Activated CD4-positive, alpha-beta memory T cell treated with anti-CD3 and anti-CD28 coated beads, Interleukin-2, amount 10 ng/mL, durations not matched to agents 7 days and 5 days (primary cell): ENCODE measurements at regions of chr1 and their contacts with region 1.

Region 1: DNA sequence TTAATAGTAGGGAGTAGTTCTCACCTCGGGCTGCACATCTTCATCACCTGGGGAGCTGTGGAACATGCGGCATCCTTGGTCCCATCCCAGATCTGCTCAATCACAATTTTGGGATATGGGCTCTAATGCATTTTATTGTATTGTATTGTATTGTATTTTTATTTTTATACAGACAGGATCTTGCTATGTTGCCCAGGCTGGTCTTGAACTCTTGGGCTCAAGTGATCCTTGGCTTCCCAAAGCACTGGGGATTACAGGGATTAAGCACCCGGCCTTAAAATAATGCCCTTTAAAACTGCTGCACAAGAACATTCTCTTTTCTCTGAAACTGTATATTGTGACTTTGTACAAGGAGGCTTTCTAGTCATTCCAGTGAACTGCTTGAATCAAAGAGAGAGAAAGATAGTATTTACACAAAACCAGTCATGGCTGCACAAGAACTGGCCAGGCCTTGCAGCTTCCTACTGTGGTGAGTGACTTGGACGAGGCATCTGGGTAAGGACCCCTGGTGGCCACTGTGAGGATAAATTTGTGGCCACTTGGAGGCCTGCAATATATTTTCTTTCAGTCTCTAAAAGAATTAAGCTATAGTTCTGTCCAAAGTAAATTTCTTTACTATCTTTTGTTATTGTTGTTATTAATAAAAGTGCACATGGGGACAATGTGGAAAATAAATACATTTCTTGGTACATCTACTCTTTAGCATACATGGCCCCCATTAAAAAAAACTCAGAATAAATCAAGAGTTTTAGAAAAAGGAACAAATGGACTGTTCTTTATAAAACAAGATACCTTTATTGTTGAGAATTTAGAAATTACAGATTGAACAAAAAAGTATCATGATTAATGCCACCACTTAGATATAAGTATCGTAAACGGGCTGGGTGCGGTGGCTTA is 48.0 kb downstream of the TBCE start:
- DNase-seq: peak; percentile 66
- H3K4me3 Mint-ChIP-seq: no peak overlapping the region
- H3K27ac Mint-ChIP-seq: no peak overlapping the region
- H3K4me1 Mint-ChIP-seq: peaks cover 2% of the 10 kb centered on the region
- H3K27me3 Mint-ChIP-seq: no peaks in the 10 kb centered on the region

Region 2: GRCh38 chr1:235093696-235094592 is 321.3 kb before region 1 on chr1:
- CTCF ChIA-PET with region 1: interaction called, 19 read pairs
- POLR2A ChIA-PET with region 1: no interaction called
- DNase-seq: peak; percentile 85
- H3K4me3 Mint-ChIP-seq: no peak overlapping the region
- H3K27ac Mint-ChIP-seq: no peak overlapping the region
- H3K4me1 Mint-ChIP-seq: peaks cover 13% of the 10 kb centered on the region
- H3K27me3 Mint-ChIP-seq: peaks cover 3% of the 10 kb centered on the region

Region 3: DNA sequence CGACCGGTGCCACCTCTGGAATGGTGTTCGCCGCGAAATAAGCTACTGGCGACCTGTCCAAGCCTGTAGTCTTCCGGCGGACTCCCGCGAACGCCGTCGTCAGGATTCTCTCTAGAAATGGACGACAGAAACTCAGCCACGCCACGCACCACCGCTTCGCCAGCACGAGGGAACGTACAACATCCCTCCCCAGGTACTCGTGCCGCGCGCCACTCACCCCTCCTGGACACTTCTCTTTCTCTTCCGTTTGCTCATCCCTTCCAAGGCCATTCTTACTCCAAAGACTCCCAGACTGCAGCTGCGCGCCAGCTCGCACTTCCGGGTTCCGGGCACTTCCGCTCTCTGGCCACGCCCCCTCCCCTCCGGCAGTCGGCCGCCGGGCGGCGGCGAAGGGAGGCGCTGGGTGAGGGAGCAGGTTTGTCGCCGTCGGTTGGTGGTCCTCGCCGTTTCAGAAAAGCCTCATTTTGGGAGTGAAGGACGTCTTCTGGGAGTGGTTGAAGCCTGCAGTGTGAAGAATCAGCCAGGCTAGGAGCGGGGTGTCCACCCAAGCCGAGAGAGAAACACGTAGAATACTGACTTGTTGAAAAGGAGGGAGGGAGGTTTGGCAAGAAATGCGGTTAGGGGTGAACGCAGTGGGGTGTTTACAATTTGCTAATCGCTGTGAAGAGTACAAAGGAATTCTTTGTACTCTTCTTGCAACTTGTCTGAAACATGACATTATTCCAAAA is 254.1 kb before region 1 on chr1 and contains the start of gene RBM34:
- CTCF ChIA-PET with region 1: interaction called, 19 read pairs
- POLR2A ChIA-PET with region 1: interaction called, 4 read pairs
- DNase-seq: peak; percentile 93
- H3K4me3 Mint-ChIP-seq: peak within 1 kb of the TSS; percentile 98
- H3K27ac Mint-ChIP-seq: peak within 1 kb of the TSS; percentile 95
- H3K4me1 Mint-ChIP-seq: peaks cover 26% of the 10 kb centered on the region
- H3K27me3 Mint-ChIP-seq: no peaks in the 10 kb centered on the region
- total RNA-seq, gene RBM34: 95.7 to 102 TPM

Region 4: DNA sequence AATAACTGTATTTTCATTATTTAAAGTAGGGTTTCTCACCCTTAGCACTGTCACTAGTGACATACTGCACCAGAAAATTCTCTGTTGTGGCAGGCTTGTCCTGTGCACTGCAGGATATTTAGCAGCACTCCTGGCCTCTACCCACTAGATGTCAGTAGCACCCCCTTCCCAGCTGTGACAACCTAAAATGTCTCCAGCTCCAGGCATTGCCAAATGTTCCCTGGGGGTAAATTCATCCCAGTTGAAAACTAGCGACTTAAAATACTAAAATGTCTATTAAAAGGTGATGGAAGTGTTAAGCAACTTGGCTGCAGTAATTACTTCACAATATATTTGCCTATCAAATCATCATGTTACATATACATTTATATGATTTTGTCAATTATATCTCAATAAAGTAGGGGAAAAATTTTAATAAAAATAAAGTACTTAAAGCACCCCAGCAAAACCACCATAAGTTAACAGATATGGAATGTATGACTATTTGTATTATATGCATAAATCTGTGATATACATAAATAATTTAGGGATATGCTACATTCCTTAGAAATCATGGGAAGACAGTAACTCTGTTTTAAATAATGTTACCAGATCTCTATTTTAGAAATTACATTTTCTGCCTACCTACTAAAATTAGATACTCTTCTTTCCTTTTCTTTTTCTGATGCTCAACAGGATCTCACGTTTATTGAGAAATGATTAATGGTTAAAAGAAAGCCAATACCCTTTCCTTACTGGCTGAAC is 161.9 kb before region 1 on chr1:
- CTCF ChIA-PET with region 1: interaction called, 43 read pairs
- POLR2A ChIA-PET with region 1: no interaction called
- DNase-seq: peak; percentile 61
- H3K4me3 Mint-ChIP-seq: no peak overlapping the region
- H3K27ac Mint-ChIP-seq: no peak overlapping the region
- H3K4me1 Mint-ChIP-seq: peaks cover 19% of the 10 kb centered on the region
- H3K27me3 Mint-ChIP-seq: no peaks in the 10 kb centered on the region

Region 5: DNA sequence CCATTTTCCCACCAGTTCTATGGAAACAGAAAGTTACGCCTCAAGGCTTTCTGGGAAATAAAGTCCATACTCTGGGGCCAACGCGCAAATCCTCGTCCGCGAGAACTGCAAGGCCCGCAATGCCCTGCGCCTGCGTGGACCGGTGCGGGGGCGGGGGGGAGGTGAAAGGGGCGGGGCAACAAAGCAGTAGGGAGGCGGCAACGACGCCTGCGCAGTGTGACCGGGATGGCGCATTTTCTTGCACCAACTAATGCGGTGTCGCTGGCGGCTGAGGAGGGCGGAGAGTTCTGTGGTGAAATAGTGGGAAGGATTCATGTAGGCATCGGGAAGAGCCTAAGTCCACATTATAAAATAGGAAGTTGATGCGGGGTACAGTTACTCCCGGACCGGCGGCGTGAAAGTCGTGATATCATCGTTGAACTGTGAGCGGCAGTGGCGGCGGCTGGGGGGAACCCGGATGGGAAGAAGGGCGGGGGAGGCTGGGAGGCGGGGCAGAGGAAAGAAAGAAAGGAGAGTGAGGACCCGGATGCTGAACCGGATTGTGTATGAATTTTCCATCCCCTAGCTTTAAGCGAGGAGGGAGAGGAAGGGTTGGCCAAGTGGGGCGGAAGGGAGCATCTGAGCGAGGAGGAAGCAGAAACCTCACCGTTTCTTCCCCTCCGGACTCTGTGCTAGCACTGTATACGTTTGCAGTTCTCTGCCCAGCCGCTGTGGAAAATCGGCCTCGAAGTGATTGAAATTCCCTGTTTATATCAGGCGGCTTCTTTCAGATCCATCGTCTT is 86.7 kb before region 1 on chr1 and contains the start of gene GGPS1:
- CTCF ChIA-PET with region 1: interaction called, 11 read pairs
- POLR2A ChIA-PET with region 1: interaction called, 3 read pairs
- DNase-seq: peak; percentile 99
- H3K4me3 Mint-ChIP-seq: no peak within 1 kb of the TSS
- H3K27ac Mint-ChIP-seq: no peak within 1 kb of the TSS
- H3K4me1 Mint-ChIP-seq: peaks cover 41% of the 10 kb centered on the region
- H3K27me3 Mint-ChIP-seq: no peaks in the 10 kb centered on the region
- total RNA-seq, gene GGPS1: 28.2 to 34.3 TPM

Region 6: DNA sequence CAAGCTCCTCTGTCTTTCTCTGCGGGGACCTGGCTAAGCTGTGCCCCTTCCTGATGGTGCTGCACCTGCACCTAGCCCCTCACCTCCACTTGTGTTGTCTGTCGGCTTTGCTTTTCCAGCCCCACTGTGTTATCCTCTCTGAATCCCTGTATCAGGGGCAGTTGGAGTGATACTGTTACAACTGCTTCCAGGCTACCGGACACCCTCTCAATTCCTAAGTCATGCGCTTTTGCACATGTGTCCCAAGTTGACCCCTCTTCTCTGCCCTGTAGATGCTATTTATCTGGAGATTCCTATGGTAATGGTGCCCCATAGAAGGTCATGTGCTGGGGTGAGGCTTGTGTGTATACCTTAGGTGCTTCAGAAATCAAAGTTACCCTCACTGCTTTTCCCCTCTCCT is 10.9 kb after region 1 on chr1:
- CTCF ChIA-PET with region 1: interaction called, 10 read pairs
- POLR2A ChIA-PET with region 1: interaction called, 3 read pairs
- DNase-seq: no peak
- H3K4me3 Mint-ChIP-seq: no peak overlapping the region
- H3K27ac Mint-ChIP-seq: no peak overlapping the region
- H3K4me1 Mint-ChIP-seq: peaks cover 13% of the 10 kb centered on the region
- H3K27me3 Mint-ChIP-seq: no peaks in the 10 kb centered on the region

Region 7: GRCh38 chr1:235617808-235618207 is 202.6 kb after region 1 on chr1:
- CTCF ChIA-PET with region 1: no interaction called
- POLR2A ChIA-PET with region 1: no interaction called
- DNase-seq: no peak
- H3K4me3 Mint-ChIP-seq: no peak overlapping the region
- H3K27ac Mint-ChIP-seq: no peak overlapping the region
- H3K4me1 Mint-ChIP-seq: no peaks in the 10 kb centered on the region
- H3K27me3 Mint-ChIP-seq: peaks cover 3% of the 10 kb centered on the region